ENCODE measurements at regions of chr17 and their contacts with region 1.

Region 1: GRCh38 chr17:29140051-29140621 is 40.1 kb downstream of the MYO18A start:
- DNase-seq: peak; percentile 92
- H3K4me3 Mint-ChIP-seq: peak overlapping the region; percentile 98
- H3K27ac Mint-ChIP-seq: peak overlapping the region; percentile 100
- H3K4me1 Mint-ChIP-seq: peaks cover 79% of the 10 kb centered on the region
- H3K27me3 Mint-ChIP-seq: no peaks in the 10 kb centered on the region

Region 2: GRCh38 chr17:29116804-29117772 is 23.0 kb before region 1 on chr17:
- CTCF ChIA-PET with region 1: interaction called, 286 read pairs
- POLR2A ChIA-PET with region 1: interaction called, 26 read pairs
- DNase-seq: peak; percentile 80
- H3K4me3 Mint-ChIP-seq: no peak overlapping the region
- H3K27ac Mint-ChIP-seq: no peak overlapping the region
- H3K4me1 Mint-ChIP-seq: peaks cover 4% of the 10 kb centered on the region
- H3K27me3 Mint-ChIP-seq: no peaks in the 10 kb centered on the region

Region 3: DNA sequence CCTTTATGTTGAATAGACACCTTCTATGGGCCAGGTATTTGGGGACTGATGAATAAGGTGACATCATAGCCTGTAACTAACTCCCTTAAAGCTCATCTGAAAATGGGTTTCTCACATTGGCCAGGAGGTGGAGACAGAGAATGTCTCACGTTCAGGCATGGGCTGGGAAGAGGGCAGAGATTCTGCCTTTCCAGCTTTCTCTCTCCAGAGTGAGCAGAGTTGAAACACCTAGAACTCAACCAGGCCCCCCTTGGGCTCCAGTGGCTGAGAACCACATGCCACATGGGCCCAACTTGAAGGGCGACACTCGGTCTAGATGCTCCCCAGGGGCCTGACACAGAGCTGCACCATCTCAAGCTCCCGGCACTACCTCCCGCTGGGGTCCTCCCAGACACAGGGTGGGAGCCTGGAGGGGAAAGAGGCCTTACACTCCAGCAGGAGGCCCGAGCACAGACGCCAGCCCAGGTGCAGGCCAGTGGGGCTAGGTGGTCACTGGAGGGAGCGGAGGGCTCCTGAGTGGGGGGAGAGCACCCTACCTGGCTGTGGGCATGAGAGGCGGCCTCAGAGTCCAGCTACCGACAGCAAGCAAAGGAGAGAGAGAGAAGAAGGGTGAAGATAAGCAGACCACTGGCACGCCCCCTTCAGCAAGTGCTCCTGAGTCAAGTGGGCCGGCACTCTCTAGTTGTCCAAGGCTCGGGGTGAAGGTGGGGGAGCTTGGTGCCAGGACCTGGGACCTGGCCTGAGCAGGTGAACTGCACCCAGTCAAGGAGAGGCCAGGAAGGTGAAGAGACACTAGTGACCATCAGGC is 15.8 kb before region 1 on chr17:
- CTCF ChIA-PET with region 1: interaction called, 286 read pairs
- POLR2A ChIA-PET with region 1: interaction called, 57 read pairs
- DNase-seq: peak; percentile 53
- H3K4me3 Mint-ChIP-seq: no peak overlapping the region
- H3K27ac Mint-ChIP-seq: no peak overlapping the region
- H3K4me1 Mint-ChIP-seq: peaks cover 8% of the 10 kb centered on the region
- H3K27me3 Mint-ChIP-seq: no peaks in the 10 kb centered on the region

Region 4: GRCh38 chr17:29155227-29155965 is 15.3 kb after region 1 on chr17:
- CTCF ChIA-PET with region 1: interaction called, 15 read pairs
- POLR2A ChIA-PET with region 1: interaction called, 11 read pairs
- DNase-seq: peak; percentile 77
- H3K4me3 Mint-ChIP-seq: peak overlapping the region; percentile 41
- H3K27ac Mint-ChIP-seq: peak overlapping the region; percentile 90
- H3K4me1 Mint-ChIP-seq: peaks cover 50% of the 10 kb centered on the region
- H3K27me3 Mint-ChIP-seq: no peaks in the 10 kb centered on the region

Region 5: DNA sequence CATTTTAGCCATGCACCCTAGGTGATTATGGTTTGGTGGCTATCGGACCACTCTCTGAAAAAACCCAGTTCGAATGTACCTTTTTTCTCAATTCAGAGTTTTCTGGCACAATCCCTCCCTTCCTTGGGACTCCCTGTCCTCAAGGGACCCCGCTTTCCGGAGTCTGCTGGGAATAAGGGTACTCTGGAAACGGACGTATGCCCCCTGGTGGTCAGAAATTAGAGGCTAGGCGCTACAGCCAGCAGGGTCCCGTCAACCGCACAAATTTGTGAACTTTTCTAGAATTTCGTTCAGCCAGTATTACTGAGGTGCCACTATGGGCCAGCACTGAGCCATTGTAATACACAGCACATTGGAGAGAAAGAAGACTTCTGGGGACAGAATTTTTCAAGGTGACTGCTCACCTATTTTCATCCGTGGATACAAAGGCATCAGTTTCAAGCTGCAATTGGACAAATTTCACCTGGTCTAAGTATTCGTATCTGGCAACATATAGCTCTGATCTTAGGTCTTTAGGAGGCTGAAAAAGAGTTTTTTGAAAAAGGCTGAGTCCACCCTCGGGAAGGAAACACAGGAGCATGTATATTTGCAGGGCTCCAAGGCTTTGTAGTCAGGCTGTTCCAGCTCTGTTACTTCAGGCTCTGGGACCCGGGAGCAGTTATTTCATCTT is 79.4 kb after region 1 on chr17:
- CTCF ChIA-PET with region 1: interaction called, 163 read pairs
- POLR2A ChIA-PET with region 1: interaction called, 6 read pairs
- DNase-seq: peak; percentile 72
- H3K4me3 Mint-ChIP-seq: no peak overlapping the region
- H3K27ac Mint-ChIP-seq: no peak overlapping the region
- H3K4me1 Mint-ChIP-seq: peaks cover 6% of the 10 kb centered on the region
- H3K27me3 Mint-ChIP-seq: peaks cover 4% of the 10 kb centered on the region

Measured in activated CD4-positive, alpha-beta memory T cell treated with anti-CD3 and anti-CD28 coated beads, Interleukin-2, amount 10 ng/mL, durations not matched to agents 7 days and 5 days (primary cell).